ENCODE measurements at regions of chr16 and their contacts with region 1.

Region 1: DNA sequence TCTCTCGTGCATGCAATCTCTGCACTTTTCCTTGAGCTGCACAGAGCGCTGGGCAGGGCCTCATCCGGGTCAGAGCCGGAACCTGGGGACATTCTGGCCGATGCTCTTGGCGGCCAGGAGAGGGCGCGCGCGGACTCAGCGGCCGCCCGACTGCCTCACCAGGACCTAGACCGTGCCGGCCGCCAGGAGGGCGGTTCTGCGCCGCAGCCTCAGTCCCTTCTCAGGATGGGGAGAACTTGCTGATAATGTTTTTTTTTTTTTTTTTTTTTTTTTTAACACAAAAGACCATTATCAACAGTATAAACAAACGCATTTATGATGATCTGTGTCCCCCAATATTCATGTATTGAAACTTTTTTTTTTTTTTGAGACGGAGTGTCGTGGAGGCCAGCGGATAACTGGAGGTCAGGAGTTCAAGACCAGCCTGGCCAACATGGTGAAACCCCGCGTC is 8.1 kb upstream of the FLYWCH2 start:
- DNase-seq: peak; percentile 78
- ATAC-seq: peak; percentile 98
- H3K4me3 Mint-ChIP-seq: no peak overlapping the region
- H3K27ac Mint-ChIP-seq: no peak overlapping the region
- H3K4me1 Mint-ChIP-seq: peaks cover 14% of the 10 kb centered on the region
- H3K27me3 Mint-ChIP-seq: peaks cover 13% of the 10 kb centered on the region

Region 2: GRCh38 chr16:2911580-2912329 is 36.8 kb after region 1 on chr16 and contains the start of gene FLYWCH1:
- CTCF ChIA-PET with region 1: interaction called, 14 read pairs
- POLR2A ChIA-PET with region 1: no interaction called
- DNase-seq: peak; percentile 99
- ATAC-seq: peak; percentile 96
- H3K4me3 Mint-ChIP-seq: peak within 1 kb of the TSS; percentile 88
- H3K27ac Mint-ChIP-seq: peak within 1 kb of the TSS; percentile 83
- H3K4me1 Mint-ChIP-seq: peaks cover 34% of the 10 kb centered on the region
- H3K27me3 Mint-ChIP-seq: peaks cover 5% of the 10 kb centered on the region
- total RNA-seq, gene FLYWCH1: 44.6 to 48.9 TPM

Region 3: DNA sequence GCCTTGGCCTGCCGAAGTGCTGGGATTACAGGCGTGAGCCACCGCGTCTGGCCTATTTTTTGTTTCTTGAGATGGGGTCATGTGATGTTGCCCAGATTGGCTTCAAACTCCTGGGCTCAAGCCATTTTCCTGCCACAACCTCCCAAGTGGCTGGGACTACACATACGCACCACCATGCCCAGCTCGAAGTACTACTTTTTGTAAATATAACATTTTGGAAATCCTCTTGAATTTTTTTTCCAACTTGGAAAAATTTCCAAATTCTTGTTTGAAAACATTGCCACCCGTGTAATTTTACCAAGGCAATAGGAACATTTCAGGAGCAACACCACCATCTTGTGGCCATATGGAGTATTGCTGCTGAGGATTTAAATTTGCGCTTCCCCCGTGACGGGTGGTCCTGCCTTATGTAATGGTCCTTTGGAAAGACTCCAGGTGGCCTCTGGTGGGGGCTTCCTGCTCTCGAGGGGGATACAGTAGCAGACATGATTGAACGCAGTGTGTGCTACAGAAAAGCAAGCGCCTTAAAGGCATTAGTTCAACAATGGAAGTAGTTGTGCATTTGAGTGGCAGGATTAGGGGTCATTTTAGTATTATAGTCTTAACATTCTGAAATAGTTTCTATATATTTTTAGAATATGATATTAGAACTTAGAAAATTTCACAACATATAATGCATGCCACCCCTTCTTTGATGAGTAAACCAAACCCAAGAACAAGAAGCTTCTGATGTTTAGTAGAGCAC is 44.7 kb after region 1 on chr16:
- CTCF ChIA-PET with region 1: interaction called, 17 read pairs
- POLR2A ChIA-PET with region 1: no interaction called
- DNase-seq: peak; percentile 76
- ATAC-seq: no peak
- H3K4me3 Mint-ChIP-seq: no peak overlapping the region
- H3K27ac Mint-ChIP-seq: peak overlapping the region; percentile 52
- H3K4me1 Mint-ChIP-seq: peaks cover 11% of the 10 kb centered on the region
- H3K27me3 Mint-ChIP-seq: no peaks in the 10 kb centered on the region

Region 4: GRCh38 chr16:2936436-2937011 is 61.6 kb after region 1 on chr16:
- CTCF ChIA-PET with region 1: no interaction called
- POLR2A ChIA-PET with region 1: no interaction called
- DNase-seq: no peak
- ATAC-seq: no peak
- H3K4me3 Mint-ChIP-seq: no peak overlapping the region
- H3K27ac Mint-ChIP-seq: no peak overlapping the region
- H3K4me1 Mint-ChIP-seq: peaks cover 8% of the 10 kb centered on the region
- H3K27me3 Mint-ChIP-seq: no peaks in the 10 kb centered on the region

Region 5: DNA sequence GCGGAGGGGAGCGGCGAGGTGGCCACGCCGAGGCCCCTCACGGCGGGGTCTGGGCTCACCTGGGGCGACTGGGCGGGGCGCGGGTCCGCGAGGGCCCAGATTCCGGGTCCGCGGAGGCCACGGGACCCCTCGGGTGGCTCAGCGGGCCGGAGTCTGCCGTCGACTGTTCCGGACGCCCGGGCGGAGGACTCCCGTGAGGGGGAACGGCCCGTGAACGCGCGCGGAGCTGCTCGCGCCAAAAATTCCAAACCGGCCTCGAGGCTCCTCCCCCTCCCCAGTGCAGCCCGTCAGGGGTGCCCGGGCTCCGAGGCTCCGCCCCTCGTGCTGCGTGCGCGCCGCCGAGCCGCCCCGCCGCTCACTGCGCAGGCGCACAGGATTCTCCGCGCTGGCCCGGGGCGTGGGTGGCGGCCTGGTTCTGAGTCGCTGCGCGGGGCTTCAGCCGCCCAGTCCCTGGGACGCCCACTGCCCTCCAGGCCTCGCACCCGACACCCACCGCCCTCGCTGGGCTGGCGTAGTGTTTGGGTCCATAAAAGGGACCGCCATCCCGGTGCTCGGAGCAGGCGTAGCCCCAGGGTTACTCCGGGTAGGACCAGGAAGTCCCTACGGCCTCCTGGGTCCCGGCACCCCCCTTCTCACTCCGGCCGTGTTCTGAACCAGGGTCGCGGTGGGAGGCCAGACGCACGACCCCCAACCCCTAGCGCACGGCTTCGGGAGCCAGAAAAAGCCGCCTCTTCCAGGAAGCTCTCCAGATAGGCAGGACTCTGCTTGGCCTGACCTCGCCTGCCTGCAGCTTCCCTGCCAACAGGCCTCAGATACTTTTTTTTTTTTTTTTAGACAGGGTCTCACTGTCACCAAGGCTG is 105.5 kb after region 1 on chr16 and contains the start of gene PKMYT1:
- CTCF ChIA-PET with region 1: no interaction called
- POLR2A ChIA-PET with region 1: no interaction called
- DNase-seq: peak; percentile 95
- ATAC-seq: peak; percentile 95
- H3K4me3 Mint-ChIP-seq: peak within 1 kb of the TSS; percentile 87
- H3K27ac Mint-ChIP-seq: peak within 1 kb of the TSS; percentile 88
- H3K4me1 Mint-ChIP-seq: peaks cover 45% of the 10 kb centered on the region
- H3K27me3 Mint-ChIP-seq: no peaks in the 10 kb centered on the region
- total RNA-seq, gene PKMYT1: 144 to 160 TPM

Measured in activated CD8-positive, alpha-beta T cell treated with anti-CD3 and anti-CD28 coated beads, Interleukin-2, amount 10 ng/mL, durations not matched to agents 7 days and 5 days (primary cell).